Right ventricle myocardium inferior (tissue), 1 donor: ENCODE measurements at regions of chr19 and their contacts with region 1.

Region 1: GRCh38 chr19:44576843-44577565 is 36.4 kb upstream of the IGSF23 start:
- DNase-seq: no peak
- ATAC-seq: peak; percentile 64

Region 2: DNA sequence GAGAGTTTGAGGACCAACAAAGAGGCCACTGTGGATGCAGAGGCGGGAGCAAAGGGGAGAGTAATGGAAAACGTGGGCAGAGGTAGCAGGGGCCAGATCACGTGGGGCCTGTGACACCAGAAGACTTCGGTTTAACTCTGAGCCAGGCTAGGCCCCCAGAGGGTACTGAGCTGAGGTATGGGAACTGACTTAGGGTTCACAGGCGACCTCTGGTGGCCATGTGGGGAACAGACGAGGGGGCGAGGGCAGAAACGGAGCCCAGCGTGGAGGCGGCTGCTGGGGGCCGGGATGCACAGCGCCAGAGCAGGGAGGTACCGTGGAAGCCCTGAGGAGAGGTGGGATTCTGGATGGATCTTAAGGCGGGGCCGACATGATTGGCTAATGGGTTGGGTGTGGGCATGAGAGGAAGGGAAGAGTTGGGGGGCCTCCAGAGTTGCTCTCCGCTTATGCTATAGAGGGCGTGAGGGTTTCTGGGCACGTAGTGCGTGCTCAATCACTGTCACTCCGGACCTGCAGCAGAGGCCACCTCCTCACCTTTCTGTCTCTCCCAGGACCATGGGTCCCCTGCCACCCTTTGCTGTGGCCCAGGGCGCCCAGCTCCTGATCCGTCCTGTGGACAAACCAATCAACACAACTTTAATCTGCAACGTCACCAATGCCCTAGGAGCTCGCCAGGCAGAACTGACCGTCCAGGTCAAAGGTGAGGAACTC is 80.4 kb after region 1 on chr19:
- intact Hi-C with region 1: loop called (anchors 1 kb)
- DNase-seq: peak; percentile 88
- ATAC-seq: peak; percentile 63